B cell (primary cell): ENCODE measurements at regions of chr16 and their contacts with region 1.

Region 1: DNA sequence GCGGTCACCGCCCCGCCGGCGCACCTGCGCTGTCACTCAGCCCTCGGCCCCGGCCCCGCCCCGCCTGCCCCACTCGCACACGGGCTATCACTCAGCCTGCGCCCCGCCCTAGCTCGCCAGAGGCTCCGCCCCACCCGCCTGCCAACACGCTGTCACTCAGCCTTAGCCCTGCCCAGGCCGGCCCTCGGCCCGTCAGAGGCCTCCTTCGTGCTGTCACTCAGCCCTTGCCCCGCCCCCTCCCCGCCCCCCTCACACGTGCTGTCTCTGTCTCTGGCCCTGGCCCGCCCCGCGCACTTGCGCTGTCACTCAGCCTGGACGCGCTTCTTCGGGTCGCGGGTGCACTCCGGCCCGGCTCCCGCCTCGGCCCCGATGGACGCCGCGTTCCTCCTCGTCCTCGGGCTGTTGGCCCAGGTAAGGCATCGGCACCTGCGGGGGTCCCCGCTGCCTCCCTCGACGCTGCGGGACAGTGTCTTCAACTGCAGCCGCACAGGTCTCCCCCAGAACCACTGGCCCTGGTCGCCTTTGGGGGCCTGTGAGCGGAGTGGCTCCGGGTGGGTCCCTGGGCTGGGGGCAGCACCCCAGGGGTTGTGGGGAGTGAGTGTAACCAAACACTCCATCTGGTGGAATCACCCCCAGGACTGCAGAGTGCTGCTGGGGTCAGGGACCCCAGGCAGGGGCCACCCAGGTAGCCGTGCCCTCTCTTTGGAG is at the start of gene CDH15:
- DNase-seq: peak; percentile 97
- ATAC-seq: peak; percentile 95
- H3K4me3 ChIP-seq: peak within 1 kb of the TSS in 4 of 5 experiments; percentile 31 to 51 (median 38)
- H3K4me3 Mint-ChIP-seq: peak within 1 kb of the TSS; percentile 59
- H3K27ac ChIP-seq: no peak within 1 kb of the TSS
- H3K27ac Mint-ChIP-seq: peak within 1 kb of the TSS; percentile 62
- H3K4me1 ChIP-seq: peaks cover 28 to 40% of the 10 kb centered on the region in 2 donors
- H3K4me1 Mint-ChIP-seq: peaks cover 18% of the 10 kb centered on the region
- H3K27me3 ChIP-seq: peaks cover 0 to 31% (median 13%) of the 10 kb centered on the region in 4 experiments
- H3K27me3 Mint-ChIP-seq: peaks cover 4% of the 10 kb centered on the region
- CTCF ChIP-seq: no peak
- total RNA-seq, gene CDH15: not detected in 2 replicates

Region 2: GRCh38 chr16:88737298-88738150 is 434.1 kb before region 1 on chr16:
- CTCF ChIA-PET with region 1: interaction called, 31 read pairs
- POLR2A ChIA-PET with region 1: interaction called, 3 read pairs
- intact Hi-C with region 1: loop called (anchors 1 kb)
- DNase-seq: peak; percentile 84
- ATAC-seq: peak; percentile 97
- H3K4me3 ChIP-seq: no peak overlapping the region
- H3K4me3 Mint-ChIP-seq: no peak overlapping the region
- H3K27ac ChIP-seq: no peak overlapping the region
- H3K27ac Mint-ChIP-seq: no peak overlapping the region
- H3K4me1 ChIP-seq: peaks cover 5 to 20% of the 10 kb centered on the region in 2 donors
- H3K4me1 Mint-ChIP-seq: peaks cover 6% of the 10 kb centered on the region
- H3K27me3 ChIP-seq: no peaks in the 10 kb centered on the region
- H3K27me3 Mint-ChIP-seq: no peaks in the 10 kb centered on the region
- CTCF ChIP-seq: peak; percentile 99

Region 3: GRCh38 chr16:88856828-88857733 is 314.5 kb before region 1 on chr16 and contains the starts of genes GALNS and TRAPPC2L:
- CTCF ChIA-PET with region 1: no interaction called
- POLR2A ChIA-PET with region 1: no interaction called
- intact Hi-C with region 1: loop called (anchors 1 kb)
- DNase-seq: peak; percentile 97
- ATAC-seq: peak; percentile 91
- H3K4me3 ChIP-seq: peak within 1 kb of the TSS; percentile 80 to 98 (median 93)
- H3K4me3 Mint-ChIP-seq: peak within 1 kb of the TSS; percentile 97
- H3K27ac ChIP-seq: peak within 1 kb of the TSS; percentile 63 to 84
- H3K27ac Mint-ChIP-seq: peak within 1 kb of the TSS; percentile 94
- H3K4me1 ChIP-seq: peaks cover 30 to 36% of the 10 kb centered on the region in 2 donors
- H3K4me1 Mint-ChIP-seq: peaks cover 38% of the 10 kb centered on the region
- H3K27me3 ChIP-seq: no peaks in the 10 kb centered on the region
- H3K27me3 Mint-ChIP-seq: no peaks in the 10 kb centered on the region
- CTCF ChIP-seq: no peak
- total RNA-seq, gene GALNS: 68.4 and 81.3 TPM in 2 replicates
- total RNA-seq, gene TRAPPC2L: 55.5 and 65.1 TPM in 2 replicates

Region 4: GRCh38 chr16:89122322-89122851 is 49.2 kb before region 1 on chr16:
- CTCF ChIA-PET with region 1: no interaction called
- POLR2A ChIA-PET with region 1: no interaction called
- intact Hi-C with region 1: no loop called
- DNase-seq: peak; percentile 83
- ATAC-seq: peak; percentile 85
- H3K4me3 ChIP-seq: no peak overlapping the region
- H3K4me3 Mint-ChIP-seq: no peak overlapping the region
- H3K27ac ChIP-seq: peak overlapping the region; percentile 47 to 57
- H3K27ac Mint-ChIP-seq: peak overlapping the region; percentile 88
- H3K4me1 ChIP-seq: peaks cover 15 to 17% of the 10 kb centered on the region in 2 donors
- H3K4me1 Mint-ChIP-seq: peaks cover 25% of the 10 kb centered on the region
- H3K27me3 ChIP-seq: no peaks in the 10 kb centered on the region
- H3K27me3 Mint-ChIP-seq: no peaks in the 10 kb centered on the region
- CTCF ChIP-seq: no peak

Region 5: DNA sequence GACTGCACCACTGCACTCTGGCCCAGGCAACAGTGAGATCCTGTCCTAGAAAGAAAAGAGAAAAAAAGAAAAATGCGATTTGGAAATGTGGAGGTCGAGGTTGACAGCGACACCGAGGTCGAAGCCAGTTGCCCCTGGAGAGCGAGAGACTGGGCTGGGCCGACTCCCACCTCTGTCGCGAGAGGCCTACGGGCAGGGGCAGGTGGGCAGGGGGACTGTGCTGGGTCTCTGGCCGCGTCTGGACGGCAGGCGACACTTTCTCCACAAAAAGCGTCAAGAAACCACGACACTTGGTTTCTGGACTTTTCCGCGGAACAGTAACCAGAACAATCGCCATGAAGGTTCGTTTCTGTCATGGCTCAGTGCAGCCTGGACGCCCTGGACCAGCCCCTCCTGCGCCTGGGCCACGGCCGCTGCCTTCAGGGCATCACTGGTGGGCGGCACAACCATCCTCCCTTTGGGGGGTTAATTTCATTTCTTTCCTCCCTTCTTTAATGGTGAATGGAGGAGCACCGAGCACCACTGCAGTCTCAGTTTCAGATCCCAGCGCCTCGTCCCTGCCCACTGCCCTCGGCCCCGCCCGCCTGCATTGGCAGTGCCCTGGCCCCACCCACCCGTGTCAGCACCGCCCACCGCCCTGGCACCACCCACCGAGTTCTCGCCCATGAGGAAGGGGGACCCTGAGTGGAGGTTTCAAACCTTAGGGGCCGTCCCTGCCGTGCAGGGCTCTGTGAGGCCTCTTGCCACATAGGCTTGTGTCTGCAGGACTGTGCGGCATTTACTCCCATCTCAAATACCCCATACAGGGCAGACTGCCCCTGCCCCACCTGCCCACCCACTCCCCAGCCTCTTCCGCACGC is 18.6 kb before region 1 on chr16:
- CTCF ChIA-PET with region 1: no interaction called
- POLR2A ChIA-PET with region 1: no interaction called
- intact Hi-C with region 1: loop called (anchors 2 kb)
- DNase-seq: peak; percentile 45
- ATAC-seq: peak; percentile 66
- H3K4me3 ChIP-seq: no peak overlapping the region
- H3K4me3 Mint-ChIP-seq: no peak overlapping the region
- H3K27ac ChIP-seq: no peak overlapping the region
- H3K27ac Mint-ChIP-seq: peak overlapping the region; percentile 38
- H3K4me1 ChIP-seq: no peaks in the 10 kb centered on the region
- H3K4me1 Mint-ChIP-seq: peaks cover 22% of the 10 kb centered on the region
- H3K27me3 ChIP-seq: no peaks in the 10 kb centered on the region
- H3K27me3 Mint-ChIP-seq: no peaks in the 10 kb centered on the region
- CTCF ChIP-seq: no peak

Region 6: DNA sequence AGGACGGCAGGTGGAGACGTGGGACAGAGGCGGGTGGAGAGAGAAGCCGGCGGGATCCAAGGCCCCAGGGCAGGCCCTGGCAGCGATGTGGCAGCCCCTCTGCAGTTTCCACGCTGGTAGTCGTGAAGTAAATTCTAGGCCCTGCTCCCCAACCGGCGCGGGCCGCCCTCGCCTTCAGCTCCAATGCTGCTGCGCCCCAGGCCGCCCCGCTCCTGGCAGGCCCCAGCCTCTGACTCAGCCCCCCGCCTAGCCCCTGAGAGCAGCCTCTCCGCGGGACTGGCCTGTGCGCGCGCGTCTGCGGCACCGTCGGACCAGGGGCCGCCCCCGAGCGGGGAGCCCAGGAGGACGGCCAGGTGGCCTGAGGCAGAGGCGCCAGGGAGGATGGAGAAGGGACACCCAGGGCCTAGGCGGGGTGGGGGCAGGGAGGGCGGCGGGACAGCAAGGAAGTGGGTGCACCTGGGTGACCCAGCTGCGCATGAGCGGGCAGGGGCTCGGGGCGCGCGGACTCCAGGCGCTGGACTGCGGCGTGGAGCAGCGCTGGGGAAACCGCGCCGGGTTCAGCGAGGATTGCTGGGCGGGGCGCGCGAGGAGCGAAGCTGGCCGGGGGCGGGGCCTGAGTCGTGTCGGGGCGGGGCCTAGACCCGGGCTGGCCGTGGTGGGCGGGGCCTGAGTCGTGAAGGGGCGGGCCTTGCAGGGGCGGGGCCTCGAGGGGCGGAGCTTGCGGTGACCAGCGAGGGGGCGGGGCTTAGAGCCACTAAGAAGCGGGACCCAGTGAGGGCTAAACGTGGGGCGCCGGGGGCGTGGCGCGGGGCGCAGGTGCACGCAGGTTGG is 75.5 kb after region 1 on chr16:
- CTCF ChIA-PET with region 1: interaction called, 3 read pairs
- POLR2A ChIA-PET with region 1: interaction called, 4 read pairs
- intact Hi-C with region 1: loop called (anchors 2 kb)
- DNase-seq: peak; percentile 92
- ATAC-seq: peak; percentile 96
- H3K4me3 ChIP-seq: peak overlapping the region in 4 of 5 experiments; percentile 26 to 59 (median 43)
- H3K4me3 Mint-ChIP-seq: peak overlapping the region; percentile 78
- H3K27ac ChIP-seq: no peak overlapping the region
- H3K27ac Mint-ChIP-seq: peak overlapping the region; percentile 15
- H3K4me1 ChIP-seq: peaks cover 3 to 10% of the 10 kb centered on the region in 2 donors
- H3K4me1 Mint-ChIP-seq: peaks cover 5% of the 10 kb centered on the region
- H3K27me3 ChIP-seq: no peaks in the 10 kb centered on the region
- H3K27me3 Mint-ChIP-seq: no peaks in the 10 kb centered on the region
- CTCF ChIP-seq: no peak